ENCODE measurements at regions of chr1 and their contacts with region 1.

Region 1: DNA sequence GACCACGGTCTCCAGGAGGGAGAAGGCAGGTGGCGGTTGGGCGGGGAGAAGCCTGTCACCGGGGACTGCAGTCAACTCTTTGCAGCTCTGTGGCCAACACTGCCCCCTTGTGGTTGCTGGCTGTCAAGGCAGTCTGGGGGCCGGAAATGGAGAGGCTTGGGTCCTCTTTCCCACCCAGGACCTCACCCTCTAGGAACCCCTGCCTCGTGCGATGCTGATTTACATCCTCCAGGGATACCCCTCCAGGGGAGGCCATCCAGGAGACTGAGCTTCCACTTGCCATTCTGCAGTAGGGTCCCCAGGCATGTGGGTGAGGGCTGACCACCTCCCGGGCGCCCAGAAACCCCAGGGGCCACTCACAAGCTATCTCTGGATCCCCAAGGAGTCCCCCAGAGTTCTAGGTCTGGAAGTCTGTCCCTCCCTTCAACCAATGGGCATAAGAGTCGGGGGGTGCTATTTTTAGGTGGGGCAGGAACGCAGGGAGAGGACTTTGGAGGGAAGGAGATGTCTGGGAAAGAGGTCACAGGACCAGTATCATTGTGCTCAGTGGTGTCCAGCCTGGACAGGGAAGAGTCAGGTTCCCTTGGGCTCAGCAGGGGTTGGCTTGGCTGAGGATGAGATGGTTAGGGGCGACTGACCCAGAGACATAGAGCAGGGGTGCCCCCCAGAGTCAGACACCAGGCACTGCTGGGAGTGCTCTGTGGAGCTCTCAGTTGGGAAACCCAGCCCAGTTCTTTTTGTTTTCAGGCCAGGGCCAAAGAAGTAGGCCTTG is 7.1 kb upstream of the GPR61 start:
- DNase-seq: peak; percentile 82
- ATAC-seq: peak; percentile 93
- H3K4me3 Mint-ChIP-seq: peak overlapping the region; percentile 77
- H3K27ac Mint-ChIP-seq: peak overlapping the region; percentile 74
- H3K4me1 Mint-ChIP-seq: peaks cover 8% of the 10 kb centered on the region
- H3K27me3 Mint-ChIP-seq: no peaks in the 10 kb centered on the region
- CTCF ChIP-seq: no peak

Region 2: DNA sequence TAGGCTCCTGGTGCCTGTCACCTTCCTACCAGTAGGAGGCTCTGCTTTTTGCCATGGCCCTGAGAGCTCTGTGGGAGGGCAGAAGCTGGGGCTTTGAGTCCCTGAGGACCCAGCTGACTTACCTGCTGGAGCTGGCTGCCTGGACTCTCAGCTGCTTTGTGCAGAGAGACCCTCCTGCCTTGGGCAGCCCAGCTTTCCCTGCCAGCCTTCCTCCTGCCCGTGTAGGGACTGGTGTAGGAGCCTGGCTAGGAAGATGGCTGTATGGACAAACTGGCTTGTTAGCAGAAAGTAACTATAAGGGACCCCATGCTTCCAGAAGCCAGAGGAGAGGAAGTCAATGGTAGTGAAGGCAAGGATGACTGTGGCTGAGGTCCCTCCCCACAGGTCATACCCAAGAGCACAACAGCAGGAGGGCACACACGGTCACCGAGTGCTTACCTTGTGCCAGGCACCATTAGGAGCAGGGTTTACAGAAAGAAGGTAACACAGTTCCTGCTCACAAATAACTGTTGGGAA is 292.9 kb before region 1 on chr1:
- CTCF ChIA-PET with region 1: interaction called, 5 read pairs
- POLR2A ChIA-PET with region 1: no interaction called
- intact Hi-C with region 1: loop called (anchors 1 kb)
- DNase-seq: no peak
- ATAC-seq: peak; percentile 78
- H3K4me3 Mint-ChIP-seq: no peak overlapping the region
- H3K27ac Mint-ChIP-seq: no peak overlapping the region
- H3K4me1 Mint-ChIP-seq: peaks cover 16% of the 10 kb centered on the region
- H3K27me3 Mint-ChIP-seq: peaks cover 15% of the 10 kb centered on the region
- CTCF ChIP-seq: no peak

Region 3: DNA sequence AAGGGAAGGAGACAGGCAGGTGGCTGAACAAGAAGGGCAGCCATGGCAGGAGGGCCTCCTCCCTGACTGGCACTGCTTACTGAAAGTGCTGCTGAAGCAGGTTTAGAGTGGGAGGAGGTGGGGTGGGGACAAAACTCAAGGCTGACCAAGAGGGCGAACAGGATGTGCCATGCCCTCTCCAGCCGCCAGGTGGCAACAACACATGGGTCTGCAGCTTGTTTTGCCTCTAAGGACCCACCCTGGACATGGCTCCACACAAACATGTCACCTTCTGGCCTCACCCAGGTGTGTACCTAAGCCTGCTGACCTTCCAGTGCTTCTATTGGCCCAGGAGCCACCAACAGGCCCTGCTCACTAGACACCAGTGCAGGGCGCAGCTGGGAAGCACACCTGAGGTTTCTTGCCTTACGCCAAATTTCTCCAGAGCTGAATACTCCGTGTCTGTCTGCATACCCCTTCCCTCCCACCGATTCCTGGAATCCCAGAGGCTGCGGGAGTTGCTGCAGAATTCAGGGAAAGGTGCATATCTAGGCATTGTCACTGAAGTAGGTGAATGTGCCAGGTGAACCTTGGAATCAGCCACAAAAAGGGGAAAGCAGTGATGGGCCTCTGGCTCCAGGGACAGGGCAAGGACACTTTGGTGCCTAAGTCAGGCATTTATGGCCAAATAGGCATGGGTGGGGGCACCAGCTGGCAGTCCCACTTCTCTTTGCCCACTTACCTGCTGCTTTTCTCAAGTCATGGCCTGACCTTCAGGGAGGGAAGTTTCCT is 254.9 kb before region 1 on chr1:
- CTCF ChIA-PET with region 1: interaction called, 54 read pairs
- POLR2A ChIA-PET with region 1: no interaction called
- intact Hi-C with region 1: loop called (anchors 1 kb)
- DNase-seq: peak; percentile 63
- ATAC-seq: peak; percentile 95
- H3K4me3 Mint-ChIP-seq: no peak overlapping the region
- H3K27ac Mint-ChIP-seq: no peak overlapping the region
- H3K4me1 Mint-ChIP-seq: peaks cover 5% of the 10 kb centered on the region
- H3K27me3 Mint-ChIP-seq: no peaks in the 10 kb centered on the region
- CTCF ChIP-seq: no peak

Region 4: GRCh38 chr1:109483672-109484518 is 48.7 kb before region 1 on chr1 and contains the start of gene ATXN7L2:
- CTCF ChIA-PET with region 1: interaction called, 375 read pairs
- POLR2A ChIA-PET with region 1: interaction called, 13 read pairs
- intact Hi-C with region 1: no loop called
- DNase-seq: peak; percentile 90
- ATAC-seq: peak; percentile 79
- H3K4me3 Mint-ChIP-seq: peak within 1 kb of the TSS; percentile 94
- H3K27ac Mint-ChIP-seq: peak within 1 kb of the TSS; percentile 91
- H3K4me1 Mint-ChIP-seq: peaks cover 27% of the 10 kb centered on the region
- H3K27me3 Mint-ChIP-seq: peaks cover 16% of the 10 kb centered on the region
- CTCF ChIP-seq: no peak
- total RNA-seq, gene ATXN7L2: 7.5 and 9.0 TPM in 2 replicates

Region 5: GRCh38 chr1:109516872-109517271 is 15.7 kb before region 1 on chr1:
- CTCF ChIA-PET with region 1: interaction called, 12 read pairs
- POLR2A ChIA-PET with region 1: no interaction called
- intact Hi-C with region 1: no loop called
- DNase-seq: no peak
- ATAC-seq: no peak
- H3K4me3 Mint-ChIP-seq: no peak overlapping the region
- H3K27ac Mint-ChIP-seq: no peak overlapping the region
- H3K4me1 Mint-ChIP-seq: no peaks in the 10 kb centered on the region
- H3K27me3 Mint-ChIP-seq: peaks cover 9% of the 10 kb centered on the region
- CTCF ChIP-seq: no peak

Region 6: GRCh38 chr1:109605381-109605780 is 72.8 kb after region 1 on chr1:
- CTCF ChIA-PET with region 1: no interaction called
- POLR2A ChIA-PET with region 1: no interaction called
- intact Hi-C with region 1: no loop called
- DNase-seq: no peak
- ATAC-seq: no peak
- H3K4me3 Mint-ChIP-seq: no peak overlapping the region
- H3K27ac Mint-ChIP-seq: no peak overlapping the region
- H3K4me1 Mint-ChIP-seq: no peaks in the 10 kb centered on the region
- H3K27me3 Mint-ChIP-seq: no peaks in the 10 kb centered on the region
- CTCF ChIP-seq: no peak